Activated CD4-positive, alpha-beta T cell treated with anti-CD3 and anti-CD28 coated beads, Interleukin-2, amount 10 ng/mL, durations not matched to agents 24 days and 14 days (primary cell): ENCODE measurements at regions of chr2 and their contacts with region 1.

Region 1: DNA sequence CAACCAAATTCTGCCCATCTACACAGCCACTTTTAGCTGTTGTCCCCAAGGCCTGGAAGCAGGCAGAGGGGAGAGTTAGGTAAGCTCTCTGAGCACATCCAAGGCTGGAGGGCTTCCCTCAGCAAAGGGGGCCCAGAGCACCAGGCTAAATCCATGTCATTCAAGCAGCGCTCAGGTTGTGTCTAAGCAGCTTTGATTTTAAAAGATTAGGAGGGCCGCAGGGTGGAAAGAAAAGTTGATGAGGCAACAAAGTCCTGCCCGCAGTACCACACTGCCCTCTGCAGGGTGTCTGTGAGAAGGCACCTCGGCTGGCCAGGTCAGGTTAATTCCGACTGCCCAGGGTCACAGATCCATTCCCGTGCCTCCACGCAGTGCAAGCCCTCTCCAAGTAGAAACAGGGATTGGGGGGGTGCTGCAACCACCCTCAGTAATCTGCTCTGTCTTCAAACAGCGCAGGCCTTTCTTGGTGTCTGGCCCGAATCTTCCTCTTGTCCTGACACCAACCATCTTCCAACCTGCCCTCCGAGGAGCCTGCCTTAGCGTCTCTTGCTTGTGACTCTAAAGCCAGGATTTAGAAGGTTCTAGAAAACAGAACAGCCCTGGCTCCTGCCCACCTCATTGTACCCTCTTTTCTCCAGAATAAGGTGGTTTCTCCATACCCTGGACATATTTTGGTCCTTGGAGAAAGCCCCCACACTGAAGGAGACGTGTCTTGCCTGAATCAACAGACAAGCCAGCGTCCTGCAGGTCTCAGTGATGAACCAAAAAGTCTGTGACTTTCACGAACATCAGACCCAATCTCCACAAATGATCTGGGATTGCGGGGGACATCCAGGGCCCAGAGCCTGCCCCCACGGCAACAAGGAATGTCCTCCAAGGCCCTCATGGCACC is 289.2 kb downstream of the TNS1 start:
- DNase-seq: peak; percentile 92
- H3K4me3 Mint-ChIP-seq: no peak overlapping the region
- H3K27ac Mint-ChIP-seq: no peak overlapping the region
- H3K4me1 Mint-ChIP-seq: peaks cover 1% of the 10 kb centered on the region
- H3K27me3 Mint-ChIP-seq: no peaks in the 10 kb centered on the region

Region 2: GRCh38 chr2:216683846-216684507 is 1029.7 kb before region 1 on chr2:
- intact Hi-C with region 1: loop called (anchors 2 kb)
- DNase-seq: no peak
- H3K4me3 Mint-ChIP-seq: no peak overlapping the region
- H3K27ac Mint-ChIP-seq: no peak overlapping the region
- H3K4me1 Mint-ChIP-seq: peaks cover 9% of the 10 kb centered on the region
- H3K27me3 Mint-ChIP-seq: peaks cover 25% of the 10 kb centered on the region

Region 3: DNA sequence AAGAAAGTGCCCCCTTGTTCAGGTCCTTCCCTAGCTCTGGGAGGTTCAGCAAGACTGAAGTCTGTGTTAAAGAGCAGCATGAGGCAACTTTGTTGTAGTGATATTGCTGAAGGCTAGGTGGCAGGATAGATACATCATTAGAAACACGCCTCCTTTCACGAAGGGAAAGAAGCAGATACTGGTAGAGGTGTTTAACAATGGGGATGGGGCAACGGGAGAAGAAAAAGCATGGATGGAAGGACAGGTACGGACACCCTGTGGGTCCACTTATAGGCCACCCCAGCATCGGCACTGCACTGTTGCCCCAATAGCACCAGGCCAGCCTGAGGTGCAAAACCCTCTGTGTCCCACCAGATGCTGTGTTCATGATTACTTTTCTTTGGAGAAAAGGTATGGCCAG is 1014.7 kb before region 1 on chr2:
- intact Hi-C with region 1: loop called (anchors 5 kb)
- DNase-seq: peak; percentile 77
- H3K4me3 Mint-ChIP-seq: no peak overlapping the region
- H3K27ac Mint-ChIP-seq: no peak overlapping the region
- H3K4me1 Mint-ChIP-seq: peaks cover 4% of the 10 kb centered on the region
- H3K27me3 Mint-ChIP-seq: peaks cover 45% of the 10 kb centered on the region

Region 4: DNA sequence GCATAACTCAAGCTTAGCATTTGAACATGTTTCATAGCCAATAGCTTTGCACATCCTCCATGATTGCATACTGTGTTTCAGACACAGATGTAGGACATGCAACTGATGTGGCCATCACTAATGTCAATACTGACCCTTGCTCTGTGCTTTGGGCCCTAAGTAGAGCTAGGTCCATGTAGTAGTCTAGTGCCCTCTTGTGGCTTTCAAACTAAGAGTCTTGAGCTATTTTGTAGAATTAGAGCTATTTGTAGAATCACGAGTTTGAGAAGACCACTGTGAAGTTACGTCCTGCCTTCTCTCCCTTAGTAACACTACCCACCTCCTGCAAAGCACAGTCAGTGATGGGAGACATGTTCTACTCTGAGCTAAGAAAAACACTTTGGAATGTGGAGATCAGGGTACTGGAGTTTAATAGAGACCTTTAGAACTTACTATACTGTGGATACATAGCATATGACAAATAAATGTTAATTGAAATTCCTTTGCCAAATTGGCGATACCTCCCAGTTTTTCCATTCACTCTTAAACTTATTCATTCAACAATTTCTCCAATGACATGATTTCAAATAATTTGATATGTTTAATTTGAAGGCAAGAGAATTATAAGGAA is 547.3 kb before region 1 on chr2:
- intact Hi-C with region 1: loop called (anchors 1 kb)
- DNase-seq: no peak
- H3K4me3 Mint-ChIP-seq: no peak overlapping the region
- H3K27ac Mint-ChIP-seq: no peak overlapping the region
- H3K4me1 Mint-ChIP-seq: peaks cover 20% of the 10 kb centered on the region
- H3K27me3 Mint-ChIP-seq: peaks cover 9% of the 10 kb centered on the region

Region 5: GRCh38 chr2:217510771-217511291 is 202.8 kb before region 1 on chr2:
- intact Hi-C with region 1: loop called (anchors 5 kb)
- DNase-seq: peak; percentile 80
- H3K4me3 Mint-ChIP-seq: no peak overlapping the region
- H3K27ac Mint-ChIP-seq: no peak overlapping the region
- H3K4me1 Mint-ChIP-seq: peaks cover 5% of the 10 kb centered on the region
- H3K27me3 Mint-ChIP-seq: peaks cover 7% of the 10 kb centered on the region

Region 6: GRCh38 chr2:217650716-217651360 is 62.8 kb before region 1 on chr2:
- intact Hi-C with region 1: loop called (anchors 2 kb)
- DNase-seq: peak; percentile 77
- H3K4me3 Mint-ChIP-seq: no peak overlapping the region
- H3K27ac Mint-ChIP-seq: no peak overlapping the region
- H3K4me1 Mint-ChIP-seq: no peaks in the 10 kb centered on the region
- H3K27me3 Mint-ChIP-seq: no peaks in the 10 kb centered on the region